ENCODE measurements at regions of chr12 and their contacts with region 1.

Region 1: GRCh38 chr12:13100882-13101769 is 2.3 kb downstream of the GSG1 start:
- DNase-seq: peak; percentile 91
- H3K4me3 Mint-ChIP-seq: peak overlapping the region; percentile 63
- H3K27ac Mint-ChIP-seq: peak overlapping the region; percentile 70
- H3K4me1 Mint-ChIP-seq: peaks cover 49% of the 10 kb centered on the region
- H3K27me3 Mint-ChIP-seq: no peaks in the 10 kb centered on the region

Region 2: GRCh38 chr12:12724661-12725545 is 376.2 kb before region 1 on chr12:
- CTCF ChIA-PET with region 1: no interaction called
- intact Hi-C with region 1: loop called (anchors 2 kb)
- DNase-seq: peak; percentile 94
- H3K4me3 Mint-ChIP-seq: peak overlapping the region; percentile 85
- H3K27ac Mint-ChIP-seq: peak overlapping the region; percentile 98
- H3K4me1 Mint-ChIP-seq: peaks cover 51% of the 10 kb centered on the region
- H3K27me3 Mint-ChIP-seq: no peaks in the 10 kb centered on the region

Region 3: GRCh38 chr12:12899530-12900380 is 201.4 kb before region 1 on chr12:
- CTCF ChIA-PET with region 1: interaction called, 3 read pairs
- intact Hi-C with region 1: loop called (anchors 1 kb)
- DNase-seq: peak; percentile 91
- H3K4me3 Mint-ChIP-seq: no peak overlapping the region
- H3K27ac Mint-ChIP-seq: peak overlapping the region; percentile 90
- H3K4me1 Mint-ChIP-seq: peaks cover 31% of the 10 kb centered on the region
- H3K27me3 Mint-ChIP-seq: peaks cover 4% of the 10 kb centered on the region

Region 4: DNA sequence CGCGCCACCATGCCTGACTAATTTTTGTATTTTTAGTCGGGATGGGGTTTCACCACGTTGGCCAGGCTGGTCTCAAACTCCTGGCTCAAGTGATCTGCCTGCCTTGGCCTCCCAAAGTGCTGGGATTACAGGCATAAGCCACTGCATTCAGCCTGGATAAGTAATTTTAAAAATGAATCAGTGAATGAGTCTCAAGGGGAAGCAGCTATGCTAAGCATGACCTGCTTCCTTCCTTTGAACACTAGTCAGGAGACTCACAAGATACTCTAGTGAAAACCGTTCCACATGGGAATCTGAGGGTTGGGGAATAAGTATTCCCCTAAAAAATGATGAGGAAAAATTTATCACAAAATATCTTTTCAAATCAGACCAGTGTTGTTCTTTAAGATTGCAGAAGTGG is 67.7 kb before region 1 on chr12:
- CTCF ChIA-PET with region 1: no interaction called
- intact Hi-C with region 1: no loop called
- DNase-seq: no peak
- H3K4me3 Mint-ChIP-seq: no peak overlapping the region
- H3K27ac Mint-ChIP-seq: no peak overlapping the region
- H3K4me1 Mint-ChIP-seq: no peaks in the 10 kb centered on the region
- H3K27me3 Mint-ChIP-seq: no peaks in the 10 kb centered on the region

Region 5: DNA sequence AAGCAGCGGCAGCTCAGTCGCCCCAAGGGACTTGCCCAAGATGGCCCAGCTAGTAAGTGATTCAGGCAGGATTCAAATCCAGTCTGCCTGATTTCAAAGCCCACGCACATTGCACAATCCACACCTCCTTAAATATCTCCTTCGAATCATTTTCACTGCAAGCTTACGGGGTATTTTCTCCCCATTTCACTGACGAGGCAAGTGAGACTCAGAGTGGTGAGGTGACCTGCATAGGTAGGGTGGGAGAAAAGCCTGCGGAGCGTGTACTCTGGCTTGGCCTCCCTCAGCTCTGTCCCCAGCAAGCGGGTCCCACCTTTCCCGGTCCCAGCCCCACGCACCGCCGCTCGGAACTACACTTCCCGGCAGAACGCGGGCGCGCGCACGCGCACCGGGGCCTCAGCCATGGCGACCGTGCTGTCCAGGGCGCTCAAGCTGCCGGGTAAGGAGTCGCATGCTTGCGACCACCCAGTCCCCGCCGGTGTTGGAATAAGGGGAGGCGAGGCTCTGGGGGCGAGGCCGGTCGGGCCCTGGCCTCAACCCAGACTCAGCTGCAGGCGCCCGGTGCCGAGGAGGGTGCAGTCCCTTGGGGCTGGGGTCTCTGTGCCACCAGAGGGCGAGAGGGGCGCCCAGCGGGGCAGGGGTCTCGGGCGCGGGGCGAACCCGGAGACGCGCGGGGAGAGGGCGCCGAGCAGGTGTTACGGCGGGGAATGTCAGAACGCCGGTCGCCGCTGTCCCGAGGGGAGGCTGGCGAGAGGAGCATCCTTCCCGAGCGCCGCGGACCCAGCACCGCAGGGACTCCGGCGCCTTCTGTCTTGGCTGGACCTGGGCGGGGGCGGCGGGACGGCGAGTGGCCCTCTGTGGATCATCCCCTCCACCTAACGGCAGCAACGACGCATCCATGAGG is 56.9 kb before region 1 on chr12 and contains the start of gene FAM234B:
- CTCF ChIA-PET with region 1: no interaction called
- intact Hi-C with region 1: loop called (anchors 1 kb)
- DNase-seq: peak; percentile 73
- H3K4me3 Mint-ChIP-seq: peak within 1 kb of the TSS; percentile 79
- H3K27ac Mint-ChIP-seq: no peak within 1 kb of the TSS
- H3K4me1 Mint-ChIP-seq: peaks cover 16% of the 10 kb centered on the region
- H3K27me3 Mint-ChIP-seq: no peaks in the 10 kb centered on the region
- total RNA-seq, gene FAM234B: 7.4 to 7.7 TPM

Region 6: DNA sequence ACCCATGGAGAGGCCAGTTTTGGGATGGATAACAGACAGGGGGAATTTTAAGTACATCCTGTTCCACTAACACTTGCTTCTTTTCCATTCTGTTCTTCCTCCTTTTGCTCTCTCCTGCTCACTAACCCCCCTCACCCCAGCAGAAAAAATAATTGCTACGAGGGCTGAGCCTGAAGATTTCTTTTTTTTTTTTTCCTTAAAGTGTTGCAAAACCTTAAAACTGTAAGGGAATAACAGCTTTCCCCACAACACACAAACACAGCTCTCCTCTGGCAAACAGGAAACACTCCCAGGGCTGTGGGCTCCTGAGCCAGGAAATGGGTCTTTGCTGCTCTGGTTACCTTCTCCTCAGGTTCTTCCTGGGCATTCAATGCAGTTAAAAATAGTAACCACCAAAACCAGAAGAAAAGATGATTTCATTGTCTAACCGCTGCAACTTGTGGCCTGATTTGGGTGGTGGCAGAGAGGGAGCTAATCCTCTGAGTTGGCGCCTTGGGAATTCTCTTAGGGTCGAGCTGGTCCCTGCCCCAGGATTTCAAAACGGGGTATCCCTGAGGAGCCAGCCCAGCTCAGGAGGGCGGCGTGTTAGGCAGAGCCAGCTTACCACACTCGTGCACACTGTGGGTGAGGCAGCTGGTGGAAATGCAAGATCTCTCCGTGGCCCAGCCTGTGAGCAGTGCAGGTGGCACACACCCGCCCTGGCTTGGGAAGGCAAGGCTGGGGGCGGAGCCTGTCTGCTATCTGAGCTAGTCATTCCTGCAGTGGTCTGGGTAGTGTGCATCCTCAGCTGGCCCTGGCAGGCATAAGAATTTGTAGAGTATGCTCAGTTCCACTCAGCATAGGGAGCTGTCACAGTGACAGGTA is 78.3 kb after region 1 on chr12:
- CTCF ChIA-PET with region 1: no interaction called
- intact Hi-C with region 1: loop called (anchors 1 kb)
- DNase-seq: peak; percentile 74
- H3K4me3 Mint-ChIP-seq: peak overlapping the region; percentile 37
- H3K27ac Mint-ChIP-seq: no peak overlapping the region
- H3K4me1 Mint-ChIP-seq: peaks cover 15% of the 10 kb centered on the region
- H3K27me3 Mint-ChIP-seq: no peaks in the 10 kb centered on the region

Region 7: GRCh38 chr12:13347241-13348043 is 246.3 kb after region 1 on chr12:
- CTCF ChIA-PET with region 1: no interaction called
- intact Hi-C with region 1: loop called (anchors 2 kb)
- DNase-seq: peak; percentile 68
- H3K4me3 Mint-ChIP-seq: no peak overlapping the region
- H3K27ac Mint-ChIP-seq: peak overlapping the region; percentile 36
- H3K4me1 Mint-ChIP-seq: peaks cover 6% of the 10 kb centered on the region
- H3K27me3 Mint-ChIP-seq: peaks cover 15% of the 10 kb centered on the region